GM12878 (cell line): ENCODE measurements at regions of chr11 and their contacts with region 1.

Region 1: GRCh38 chr11:133086518-133086917 is 445.8 kb downstream of the OPCML start:
- DNase-seq: no peak
- ATAC-seq: no peak
- H3K4me3 ChIP-seq: no peak overlapping the region
- H3K27ac ChIP-seq: no peak overlapping the region
- H3K4me1 ChIP-seq: no peaks in the 10 kb centered on the region
- H3K27me3 ChIP-seq: no peaks in the 10 kb centered on the region; a peak in 1 of 4 replicates
- CTCF ChIP-seq: no peak
- EP300 ChIP-seq: no peak
- POLR2A ChIP-seq: no peak
- RAD21 ChIP-seq: no peak

Region 2: GRCh38 chr11:133828871-133829270 is 742.4 kb after region 1 on chr11:
- CTCF ChIA-PET with region 1: no interaction called
- POLR2A ChIA-PET with region 1: no interaction called
- RAD21 ChIA-PET with region 1: no interaction called
- SMC1A ChIA-PET with region 1: no interaction called
- in situ Hi-C with region 1: loop called (anchors 5 kb)
- intact Hi-C with region 1: no loop called
- DNase-seq: no peak
- ATAC-seq: no peak
- H3K4me3 ChIP-seq: no peak overlapping the region
- H3K27ac ChIP-seq: no peak overlapping the region
- H3K4me1 ChIP-seq: no peaks in the 10 kb centered on the region
- H3K27me3 ChIP-seq: no peaks in the 10 kb centered on the region; a peak in 2 of 4 replicates
- CTCF ChIP-seq: no peak
- EP300 ChIP-seq: no peak
- POLR2A ChIP-seq: no peak
- RAD21 ChIP-seq: no peak